Right ventricle myocardium inferior (tissue), 1 donor: ENCODE measurements at regions of chr22 and their contacts with region 1.

Region 1: DNA sequence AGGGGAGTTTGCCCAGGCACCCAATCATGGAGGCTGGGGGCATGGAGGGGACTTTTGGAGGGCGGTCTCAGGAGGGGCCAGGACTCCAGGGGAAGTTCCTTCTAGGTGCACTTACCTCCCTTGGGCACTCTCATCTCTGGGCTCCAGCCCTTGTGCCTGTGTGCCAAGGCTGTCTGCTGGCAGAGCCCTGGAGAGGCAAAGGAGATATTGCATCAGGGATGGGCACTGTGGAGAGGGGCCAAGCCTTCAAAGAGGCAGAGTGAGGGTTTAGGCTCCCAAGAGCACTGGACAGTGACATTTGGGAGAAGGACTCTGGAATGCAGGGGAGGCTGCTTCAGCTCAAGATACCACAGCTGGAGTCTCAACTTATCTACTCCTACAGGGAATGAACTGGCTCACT is 32.2 kb upstream of the TFIP11 start:
- DNase-seq: no peak
- ATAC-seq: no peak

Region 2: DNA sequence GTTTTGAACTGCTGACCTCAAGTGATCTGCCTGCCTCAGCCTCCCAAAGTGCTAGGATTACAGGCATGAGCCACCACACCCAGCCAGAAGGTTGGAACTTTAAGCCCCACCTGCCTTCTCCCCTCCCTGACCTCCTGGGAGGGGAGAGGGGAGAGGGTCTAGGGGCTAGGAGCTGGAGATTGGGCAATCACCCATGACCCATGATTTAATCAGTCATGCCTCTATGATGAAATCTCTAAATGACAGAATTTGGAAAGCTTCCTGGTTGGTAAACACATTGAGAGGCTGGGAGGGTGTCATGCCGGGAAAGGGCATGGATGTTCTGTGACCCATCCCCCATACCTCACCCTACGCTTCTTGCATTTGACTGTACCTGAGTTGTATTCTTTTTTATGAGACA is 15.1 kb before region 1 on chr22:
- intact Hi-C with region 1: loop called (anchors 2 kb)
- DNase-seq: no peak
- ATAC-seq: no peak

Region 3: DNA sequence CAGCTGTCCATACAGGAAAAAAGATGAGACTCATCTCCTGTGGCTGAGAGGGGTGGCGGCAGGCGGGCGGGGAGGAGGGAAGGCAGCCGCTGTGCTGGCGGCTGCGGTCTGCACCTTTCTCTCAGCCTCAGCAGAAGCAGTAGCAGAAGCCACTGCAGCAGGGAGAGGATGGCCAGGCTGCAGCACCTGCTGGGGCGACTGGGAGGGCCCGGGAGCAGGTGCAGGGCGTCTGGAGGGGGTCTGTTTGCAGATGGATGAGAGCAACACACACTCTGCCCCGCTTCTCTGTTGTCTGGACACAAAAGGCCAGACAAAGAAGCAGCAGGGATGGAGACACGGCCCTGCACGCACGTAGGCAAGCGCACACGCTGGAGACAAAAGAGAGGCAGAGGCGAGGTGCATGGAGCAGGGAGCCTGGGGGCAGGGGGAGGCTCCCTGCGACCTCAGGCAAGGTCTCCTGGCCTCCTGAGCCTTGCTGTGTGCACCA is 103.6 kb after region 1 on chr22:
- intact Hi-C with region 1: no loop called
- DNase-seq: no peak
- ATAC-seq: no peak